Activated T-helper 1 cell treated with anti-CD3 and anti-CD28 coated beads, Interleukin-12 subunit alpha, Interleukin-12 subunit beta, Interleukin-2, Interleukin-4 antibody, amounts not matched to agents 30 ng/mL and 10 ng/mL and 1 ng/mL, durations not matched to agents 14 hours and 24 hours and 36 hours (primary cell): ENCODE measurements at regions of chr16 and their contacts with region 1.

Region 1: GRCh38 chr16:57734925-57735754 is 430 bp upstream of the KATNB1 start:
- DNase-seq: peak; percentile 97
- H3K4me3 Mint-ChIP-seq: peak overlapping the region; percentile 97
- H3K27ac Mint-ChIP-seq: peak overlapping the region; percentile 97
- H3K4me1 Mint-ChIP-seq: peaks cover 19% of the 10 kb centered on the region
- H3K27me3 Mint-ChIP-seq: no peaks in the 10 kb centered on the region

Region 2: GRCh38 chr16:57300387-57301125 is 434.6 kb before region 1 on chr16:
- intact Hi-C with region 1: loop called (anchors 1 kb)
- DNase-seq: peak; percentile 99
- H3K4me3 Mint-ChIP-seq: no peak overlapping the region
- H3K27ac Mint-ChIP-seq: no peak overlapping the region
- H3K4me1 Mint-ChIP-seq: peaks cover 18% of the 10 kb centered on the region
- H3K27me3 Mint-ChIP-seq: peaks cover 7% of the 10 kb centered on the region

Region 3: GRCh38 chr16:57475711-57476339 is 259.3 kb before region 1 on chr16:
- intact Hi-C with region 1: loop called (anchors 5 kb)
- DNase-seq: peak; percentile 81
- H3K4me3 Mint-ChIP-seq: peak overlapping the region; percentile 45
- H3K27ac Mint-ChIP-seq: peak overlapping the region; percentile 52
- H3K4me1 Mint-ChIP-seq: peaks cover 18% of the 10 kb centered on the region
- H3K27me3 Mint-ChIP-seq: no peaks in the 10 kb centered on the region

Region 4: DNA sequence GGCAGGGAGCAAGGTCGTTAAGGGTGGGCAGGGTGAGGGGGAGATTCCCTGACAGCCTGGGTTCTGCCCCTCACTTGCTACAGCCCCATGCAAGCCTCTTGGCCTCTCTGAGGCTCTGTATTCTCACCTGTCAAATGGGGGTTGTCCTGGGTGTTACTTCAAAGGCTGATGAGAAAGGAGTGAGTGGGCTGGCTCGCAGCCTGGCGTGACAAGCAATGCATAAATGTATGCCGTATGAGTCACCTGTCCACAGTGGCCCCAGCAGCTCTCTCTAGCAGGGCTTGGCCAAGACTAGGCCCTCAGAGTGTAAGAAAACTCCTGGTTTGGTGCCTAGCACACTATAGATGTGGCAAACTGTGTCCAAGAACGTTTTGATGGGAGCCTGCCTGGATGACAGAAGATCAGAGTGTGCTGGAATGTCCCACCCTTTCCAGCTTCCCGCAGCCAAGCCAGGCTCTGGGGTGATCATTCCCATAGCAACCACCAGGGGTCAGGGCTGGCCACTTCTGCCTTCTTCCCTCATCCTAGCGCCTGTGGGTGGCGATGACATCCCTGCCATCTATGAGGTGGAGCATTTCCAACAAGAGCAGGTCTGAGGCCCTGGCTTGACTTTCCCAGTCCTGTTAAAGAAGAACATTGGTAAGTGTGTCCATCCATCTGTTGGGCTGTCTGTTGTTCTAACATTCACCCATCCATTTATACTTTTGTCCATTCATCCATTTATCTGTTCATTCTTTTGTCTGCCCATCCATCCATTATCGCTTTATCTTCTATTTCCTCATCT is 143.9 kb before region 1 on chr16:
- intact Hi-C with region 1: loop called (anchors 1 kb)
- DNase-seq: peak; percentile 56
- H3K4me3 Mint-ChIP-seq: peak overlapping the region; percentile 63
- H3K27ac Mint-ChIP-seq: peak overlapping the region; percentile 85
- H3K4me1 Mint-ChIP-seq: peaks cover 55% of the 10 kb centered on the region
- H3K27me3 Mint-ChIP-seq: peaks cover 2% of the 10 kb centered on the region

Region 5: GRCh38 chr16:57757326-57757786 is 22.2 kb after region 1 on chr16:
- intact Hi-C with region 1: loop called (anchors 1 kb)
- DNase-seq: peak; percentile 81
- H3K4me3 Mint-ChIP-seq: no peak overlapping the region
- H3K27ac Mint-ChIP-seq: no peak overlapping the region
- H3K4me1 Mint-ChIP-seq: no peaks in the 10 kb centered on the region
- H3K27me3 Mint-ChIP-seq: no peaks in the 10 kb centered on the region

Region 6: DNA sequence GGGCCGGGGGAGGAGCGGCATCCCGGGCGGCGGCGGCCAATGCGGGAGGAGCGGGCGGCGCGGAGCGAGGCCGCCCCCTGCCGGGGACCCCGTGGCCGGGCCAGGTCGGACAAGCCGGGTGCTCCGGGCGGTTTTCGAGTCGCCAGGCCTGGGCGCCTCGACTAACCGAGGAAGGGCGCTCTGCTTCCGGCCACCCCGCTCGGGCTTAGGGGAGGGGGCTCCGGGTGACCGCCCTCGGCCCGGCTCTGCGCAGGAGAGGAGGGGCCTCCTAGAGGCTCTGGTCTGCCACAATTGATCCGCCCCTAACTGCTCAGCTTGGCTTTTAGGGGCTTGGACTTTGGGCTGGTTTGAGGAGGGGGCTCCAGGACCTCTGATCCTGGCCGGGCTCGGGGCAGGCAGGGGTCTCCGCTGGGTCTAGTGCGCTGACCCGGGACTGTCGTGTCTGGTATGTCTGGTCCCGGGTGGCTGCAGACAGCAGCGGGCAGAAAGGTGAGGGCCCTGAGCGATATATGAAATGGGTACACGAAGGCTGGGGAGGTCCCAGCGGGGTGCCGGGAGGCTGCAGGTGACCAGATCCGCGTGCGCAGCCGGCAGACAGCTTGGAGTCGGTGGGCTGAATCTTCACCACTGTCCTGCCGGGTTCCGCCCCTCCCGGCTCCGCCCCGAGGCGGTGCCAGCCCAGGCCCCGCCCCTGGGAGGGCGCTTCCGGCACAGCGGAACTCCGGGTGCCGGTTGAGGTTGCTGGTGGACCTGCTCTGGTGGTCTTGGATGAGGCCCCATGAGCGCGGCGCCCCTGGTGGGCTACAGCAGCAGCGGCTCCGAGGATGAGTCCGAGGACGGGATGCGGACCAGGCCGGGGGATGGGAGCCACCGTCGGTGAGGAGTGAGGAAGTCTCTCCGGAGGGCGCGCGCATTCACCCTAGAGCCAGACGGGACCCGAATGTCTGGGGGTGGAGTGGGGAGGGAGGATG is 265.9 kb after region 1 on chr16 and contains the start of gene USB1:
- intact Hi-C with region 1: loop called (anchors 1 kb)
- DNase-seq: peak; percentile 83
- H3K4me3 Mint-ChIP-seq: peak within 1 kb of the TSS; percentile 91
- H3K27ac Mint-ChIP-seq: peak within 1 kb of the TSS; percentile 91
- H3K4me1 Mint-ChIP-seq: peaks cover 45% of the 10 kb centered on the region
- H3K27me3 Mint-ChIP-seq: no peaks in the 10 kb centered on the region
- total RNA-seq, gene USB1: 60.8 and 63.0 TPM in 2 replicates

Region 7: GRCh38 chr16:58733671-58734458 is 998.7 kb after region 1 on chr16 and contains the start of gene GOT2:
- intact Hi-C with region 1: loop called (anchors 5 kb)
- DNase-seq: peak; percentile 78
- H3K4me3 Mint-ChIP-seq: peak within 1 kb of the TSS; percentile 100
- H3K27ac Mint-ChIP-seq: peak within 1 kb of the TSS; percentile 99
- H3K4me1 Mint-ChIP-seq: peaks cover 27% of the 10 kb centered on the region
- H3K27me3 Mint-ChIP-seq: no peaks in the 10 kb centered on the region
- total RNA-seq, gene GOT2: 135 and 137 TPM in 2 replicates